Endothelial cell of umbilical vein (primary cell): ENCODE measurements at regions of chrX and their contacts with region 1.

Region 1: GRCh38 chrX:19887911-19888879 is 795 bp upstream of the SH3KBP1 start:
- DNase-seq: peak; percentile 70
- H3K4me3 ChIP-seq: peak overlapping the region; percentile 20 to 42 (median 40)
- H3K27ac ChIP-seq: peak overlapping the region; percentile 14
- H3K4me1 ChIP-seq: peaks cover 3% of the 10 kb centered on the region
- H3K27me3 ChIP-seq: no peaks in the 10 kb centered on the region
- CTCF ChIP-seq: peak; percentile 37 to 38
- POLR2A ChIP-seq: no peak

Region 2: GRCh38 chrX:19544693-19545305 is 343.4 kb before region 1 on chrX:
- CTCF ChIA-PET with region 1: interaction called, 4 read pairs
- POLR2A ChIA-PET with region 1: no interaction called
- dilution Hi-C with region 1: no loop called
- intact Hi-C with region 1: loop called (anchors 1 kb)
- DNase-seq: peak; percentile 43
- H3K4me3 ChIP-seq: no peak overlapping the region
- H3K27ac ChIP-seq: no peak overlapping the region
- H3K4me1 ChIP-seq: no peaks in the 10 kb centered on the region
- H3K27me3 ChIP-seq: no peaks in the 10 kb centered on the region
- CTCF ChIP-seq: peak; percentile 47 to 58
- POLR2A ChIP-seq: no peak

Region 3: DNA sequence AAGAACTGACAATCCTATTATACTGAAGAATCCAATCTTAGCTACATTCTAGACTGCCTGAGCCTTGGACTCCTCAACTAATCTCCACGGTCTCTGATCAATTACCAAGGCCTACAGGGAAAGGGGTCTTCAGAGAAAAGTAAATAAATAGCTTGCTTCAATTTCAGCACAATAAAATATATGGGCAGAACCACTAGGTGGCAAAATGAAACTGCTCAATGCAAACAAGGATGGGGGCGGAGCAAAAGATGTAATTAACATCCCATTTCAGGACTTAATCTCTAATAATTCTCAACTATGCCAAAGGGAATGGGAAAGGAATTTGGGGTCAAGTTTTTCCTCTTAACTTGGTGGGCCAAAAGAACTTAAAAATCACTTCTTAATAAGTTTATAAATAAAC is 294.5 kb before region 1 on chrX:
- CTCF ChIA-PET with region 1: interaction called, 33 read pairs
- POLR2A ChIA-PET with region 1: no interaction called
- dilution Hi-C with region 1: no loop called
- intact Hi-C with region 1: loop called (anchors 1 kb)
- DNase-seq: peak; percentile 52
- H3K4me3 ChIP-seq: no peak overlapping the region
- H3K27ac ChIP-seq: no peak overlapping the region
- H3K4me1 ChIP-seq: no peaks in the 10 kb centered on the region
- H3K27me3 ChIP-seq: no peaks in the 10 kb centered on the region
- CTCF ChIP-seq: peak; percentile 22 to 27
- POLR2A ChIP-seq: no peak

Region 4: DNA sequence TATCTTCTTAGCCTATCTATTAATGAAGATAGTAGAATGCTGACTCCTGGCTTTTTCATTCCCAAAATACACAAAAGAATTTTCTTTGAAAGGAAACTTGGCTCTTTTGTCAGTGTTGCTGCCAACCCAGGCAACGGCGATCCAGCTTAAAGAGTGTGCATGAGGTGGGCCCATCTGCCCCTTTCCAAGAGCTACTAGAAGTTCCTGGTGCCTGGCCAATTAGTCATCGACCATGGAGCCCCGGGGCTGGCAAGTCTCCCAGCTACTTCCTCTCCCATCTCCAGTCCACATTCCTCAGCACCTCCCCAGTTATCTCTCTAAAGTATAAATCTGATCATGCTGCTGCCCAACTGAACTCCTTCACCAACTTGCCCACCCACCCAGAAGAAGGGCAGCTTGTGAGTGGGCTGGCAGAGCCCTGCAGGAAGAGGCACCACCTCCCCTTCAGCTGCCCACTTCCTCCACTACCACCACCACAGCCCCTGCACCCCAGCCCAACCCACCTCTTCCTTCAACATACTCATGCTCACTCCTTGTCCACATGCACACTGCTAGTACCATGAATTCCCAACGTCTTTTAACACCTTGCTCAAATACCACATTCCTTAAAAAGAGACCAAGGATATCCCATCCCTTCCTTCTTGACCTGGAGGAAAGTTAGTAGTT is 214.7 kb before region 1 on chrX:
- CTCF ChIA-PET with region 1: no interaction called
- POLR2A ChIA-PET with region 1: no interaction called
- dilution Hi-C with region 1: no loop called
- intact Hi-C with region 1: loop called (anchors 2 kb)
- DNase-seq: peak; percentile 73
- H3K4me3 ChIP-seq: no peak overlapping the region
- H3K27ac ChIP-seq: peak overlapping the region; percentile 45
- H3K4me1 ChIP-seq: peaks cover 34% of the 10 kb centered on the region
- H3K27me3 ChIP-seq: no peaks in the 10 kb centered on the region
- CTCF ChIP-seq: no peak
- POLR2A ChIP-seq: no peak

Region 5: GRCh38 chrX:19739683-19740082 is 148.5 kb before region 1 on chrX:
- CTCF ChIA-PET with region 1: interaction called, 13 read pairs
- POLR2A ChIA-PET with region 1: no interaction called
- dilution Hi-C with region 1: no loop called
- intact Hi-C with region 1: loop called (anchors 1 kb)
- DNase-seq: peak; percentile 64
- H3K4me3 ChIP-seq: no peak overlapping the region
- H3K27ac ChIP-seq: no peak overlapping the region
- H3K4me1 ChIP-seq: peaks cover 9% of the 10 kb centered on the region
- H3K27me3 ChIP-seq: no peaks in the 10 kb centered on the region
- CTCF ChIP-seq: peak; percentile 57 to 64
- POLR2A ChIP-seq: no peak

Region 6: GRCh38 chrX:20128670-20129069 is 240.5 kb after region 1 on chrX:
- CTCF ChIA-PET with region 1: no interaction called
- POLR2A ChIA-PET with region 1: no interaction called
- dilution Hi-C with region 1: no loop called
- intact Hi-C with region 1: no loop called
- DNase-seq: no peak
- H3K4me3 ChIP-seq: no peak overlapping the region
- H3K27ac ChIP-seq: no peak overlapping the region
- H3K4me1 ChIP-seq: peaks cover 6% of the 10 kb centered on the region
- H3K27me3 ChIP-seq: no peaks in the 10 kb centered on the region
- CTCF ChIP-seq: no peak
- POLR2A ChIP-seq: no peak

Region 7: DNA sequence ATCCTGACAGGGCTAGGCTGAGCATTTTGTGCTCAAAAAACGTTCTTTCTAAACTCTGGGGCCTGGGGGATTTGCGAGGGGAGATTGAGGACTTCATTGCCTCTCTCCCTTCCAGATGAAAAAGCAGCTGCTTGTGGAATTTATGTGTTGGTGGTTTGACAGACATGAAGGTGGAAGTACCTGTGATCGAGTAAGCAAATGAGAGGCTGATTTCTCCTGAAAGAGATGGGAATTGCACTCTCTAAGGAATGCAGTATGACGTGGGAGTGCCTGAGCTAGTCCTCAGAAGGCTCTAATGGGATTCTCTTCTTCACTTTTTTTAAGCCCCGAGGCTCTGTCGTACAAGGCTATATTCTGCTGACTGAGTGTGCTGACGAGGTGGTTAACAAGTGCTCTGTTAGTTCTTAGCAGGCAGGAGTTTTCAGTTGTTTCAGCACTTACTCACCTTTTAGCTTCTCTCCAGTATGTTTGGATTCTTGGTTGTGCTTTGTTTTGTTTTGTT is 1059.3 kb after region 1 on chrX:
- CTCF ChIA-PET with region 1: no interaction called
- POLR2A ChIA-PET with region 1: no interaction called
- dilution Hi-C with region 1: no loop called
- intact Hi-C with region 1: no loop called
- DNase-seq: no peak
- H3K4me3 ChIP-seq: no peak overlapping the region
- H3K27ac ChIP-seq: no peak overlapping the region
- H3K4me1 ChIP-seq: no peaks in the 10 kb centered on the region
- H3K27me3 ChIP-seq: no peaks in the 10 kb centered on the region
- CTCF ChIP-seq: no peak
- POLR2A ChIP-seq: no peak